ENCODE measurements at regions of chr16 and their contacts with region 1.

Region 1: DNA sequence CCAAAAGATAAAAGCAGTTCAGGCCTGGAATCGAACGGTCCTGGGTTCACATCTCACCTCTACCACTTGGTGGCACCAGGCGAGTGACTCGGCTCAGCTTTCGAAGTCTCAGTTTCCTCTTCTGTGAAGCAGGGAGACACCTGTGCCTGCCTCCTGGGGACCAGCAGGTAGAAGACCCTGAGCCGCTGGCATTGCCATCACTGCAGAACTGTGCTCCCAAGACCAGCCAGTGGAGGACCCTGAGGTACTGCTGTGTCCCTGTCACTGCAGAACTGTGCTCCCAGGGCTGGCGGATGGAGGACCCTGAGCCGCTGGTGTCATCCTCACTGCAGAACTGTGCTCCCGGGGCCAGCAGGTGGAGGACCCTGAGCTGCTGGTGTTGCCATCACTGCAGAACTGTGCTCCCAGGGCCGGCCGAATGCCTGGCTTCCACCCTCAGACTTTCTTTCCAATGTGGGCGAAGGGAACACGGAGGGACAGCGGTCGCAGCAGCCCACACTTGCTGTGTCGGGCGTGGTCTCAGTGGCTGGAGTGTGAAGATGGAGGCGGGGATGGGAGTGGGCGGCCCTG is 8.7 kb upstream of the SLC7A5 start:
- DNase-seq: no peak
- ATAC-seq: peak in 1 of 4 experiments; percentile 13
- H3K4me3 ChIP-seq: no peak overlapping the region
- H3K4me3 Mint-ChIP-seq: no peak overlapping the region
- H3K27ac ChIP-seq: no peak overlapping the region
- H3K27ac Mint-ChIP-seq: no peak overlapping the region
- H3K4me1 ChIP-seq: peaks cover 0 to 11% of the 10 kb centered on the region in 2 experiments
- H3K4me1 Mint-ChIP-seq: peaks cover 7 to 9% (median 8%) of the 10 kb centered on the region in 3 donors
- H3K27me3 ChIP-seq: peaks cover 0 to 21% of the 10 kb centered on the region in 2 experiments
- H3K27me3 Mint-ChIP-seq: peaks cover 3 to 9% of the 10 kb centered on the region in 2 donors

Region 2: DNA sequence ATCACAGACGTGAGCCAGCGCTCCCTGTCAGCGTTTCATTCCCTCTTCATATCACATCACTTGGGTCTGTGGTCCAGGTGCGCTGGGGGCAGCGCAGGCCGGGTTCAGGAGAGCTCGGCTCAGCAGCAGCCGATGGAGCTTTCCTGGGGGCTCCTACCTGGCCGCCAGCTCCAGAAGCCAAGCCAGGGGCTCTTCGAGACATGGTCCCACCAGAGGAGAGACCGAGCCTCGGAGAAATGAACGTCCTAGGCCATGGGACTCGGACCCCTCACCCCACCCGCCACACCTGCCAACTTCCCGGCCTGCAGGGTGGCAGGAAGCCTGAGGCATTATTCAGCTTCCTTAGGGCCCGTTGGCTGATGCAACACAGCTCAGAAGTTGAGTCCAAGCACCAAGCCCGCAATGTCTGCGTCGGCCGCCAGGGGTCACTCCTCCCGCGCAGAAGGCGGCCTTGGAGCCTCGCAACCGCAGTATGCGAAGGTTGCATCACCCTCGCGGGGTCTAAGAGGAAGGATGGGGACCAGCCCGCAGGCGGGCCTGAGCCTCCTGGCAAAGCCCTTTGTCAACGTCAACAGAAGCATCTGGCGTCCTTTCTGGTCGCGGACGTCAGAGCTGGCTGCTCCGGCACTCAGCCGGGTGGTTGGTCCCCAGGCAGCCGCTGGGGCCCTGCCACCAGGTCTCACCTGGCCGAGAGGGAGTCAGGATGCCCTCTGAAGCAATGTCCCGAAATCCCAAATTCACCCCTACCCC is 99.0 kb before region 1 on chr16:
- CTCF ChIA-PET with region 1: interaction called, 3 to 165 read pairs
- POLR2A ChIA-PET with region 1: interaction called in 1 of 2 experiments, 4 read pairs
- DNase-seq: peak; percentile 80 to 96 (median 88)
- ATAC-seq: peak; percentile 87 to 91 (median 88)
- H3K4me3 ChIP-seq: no peak overlapping the region
- H3K4me3 Mint-ChIP-seq: peak overlapping the region; percentile 5 to 78 (median 34)
- H3K27ac ChIP-seq: no peak overlapping the region
- H3K27ac Mint-ChIP-seq: peak overlapping the region; percentile 76 to 79
- H3K4me1 ChIP-seq: peaks cover 25 to 44% of the 10 kb centered on the region in 2 experiments
- H3K4me1 Mint-ChIP-seq: peaks cover 38 to 42% (median 41%) of the 10 kb centered on the region in 3 donors
- H3K27me3 ChIP-seq: peaks cover 0 to 8% of the 10 kb centered on the region in 2 experiments
- H3K27me3 Mint-ChIP-seq: no peaks in the 10 kb centered on the region

Region 3: DNA sequence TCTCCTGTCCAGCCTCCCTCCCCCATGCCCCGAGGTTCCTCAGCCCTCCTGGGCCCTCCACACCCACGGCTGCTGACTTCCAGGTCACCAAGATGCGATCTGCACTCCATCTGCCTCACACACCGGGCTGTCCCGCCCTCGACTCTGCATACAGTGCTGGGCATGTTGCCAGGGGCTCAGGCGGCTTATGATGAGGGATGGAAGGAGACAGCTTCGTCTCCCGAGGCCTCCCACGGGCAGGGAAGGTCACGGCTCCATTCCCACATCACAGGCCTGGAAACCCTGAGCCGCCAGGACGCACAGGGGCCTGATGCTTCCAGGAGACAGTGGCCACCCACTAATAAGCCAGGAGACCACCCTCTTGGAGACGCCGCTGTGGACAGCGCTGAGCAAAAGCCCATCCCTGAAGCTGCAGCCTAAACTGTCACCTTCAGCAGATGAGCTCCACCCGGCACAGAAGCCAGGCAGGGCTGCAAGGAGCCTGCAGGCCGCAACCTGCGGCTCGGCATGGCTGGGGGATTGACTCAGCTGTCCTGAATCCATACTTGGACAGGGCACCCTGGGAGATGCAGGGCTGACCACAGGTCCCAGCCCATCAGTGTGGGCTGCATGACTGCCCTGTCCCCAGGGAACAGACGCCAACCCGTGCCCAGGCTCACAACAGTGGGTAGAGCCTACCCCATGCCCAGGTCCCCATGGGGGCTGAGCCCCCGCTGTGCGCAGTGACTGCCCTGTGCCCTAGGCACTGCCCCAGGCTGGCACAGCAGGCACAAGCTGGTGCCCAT is 43.2 kb before region 1 on chr16:
- CTCF ChIA-PET with region 1: no interaction called
- POLR2A ChIA-PET with region 1: no interaction called
- DNase-seq: no peak
- ATAC-seq: no peak
- H3K4me3 ChIP-seq: no peak overlapping the region
- H3K4me3 Mint-ChIP-seq: no peak overlapping the region
- H3K27ac ChIP-seq: no peak overlapping the region
- H3K27ac Mint-ChIP-seq: no peak overlapping the region
- H3K4me1 ChIP-seq: no peaks in the 10 kb centered on the region
- H3K4me1 Mint-ChIP-seq: peaks cover 0 to 5% (median 0%) of the 10 kb centered on the region in 3 donors
- H3K27me3 ChIP-seq: no peaks in the 10 kb centered on the region
- H3K27me3 Mint-ChIP-seq: no peaks in the 10 kb centered on the region

Measured in T-cell (primary cell).